Activated CD4-positive, alpha-beta T cell treated with anti-CD3 and anti-CD28 coated beads, Interleukin-2, amount 10 ng/mL, durations not matched to agents 7 days and 5 days (primary cell): ENCODE measurements at regions of chr10 and their contacts with region 1.

Region 1: GRCh38 chr10:133329491-133330202 is 7.0 kb downstream of the CALY start:
- DNase-seq: peak; percentile 86
- H3K4me3 Mint-ChIP-seq: peak overlapping the region; percentile 13
- H3K27ac Mint-ChIP-seq: peak overlapping the region; percentile 68
- H3K4me1 Mint-ChIP-seq: peaks cover 7% of the 10 kb centered on the region
- H3K27me3 Mint-ChIP-seq: peaks cover 64% of the 10 kb centered on the region

Region 2: DNA sequence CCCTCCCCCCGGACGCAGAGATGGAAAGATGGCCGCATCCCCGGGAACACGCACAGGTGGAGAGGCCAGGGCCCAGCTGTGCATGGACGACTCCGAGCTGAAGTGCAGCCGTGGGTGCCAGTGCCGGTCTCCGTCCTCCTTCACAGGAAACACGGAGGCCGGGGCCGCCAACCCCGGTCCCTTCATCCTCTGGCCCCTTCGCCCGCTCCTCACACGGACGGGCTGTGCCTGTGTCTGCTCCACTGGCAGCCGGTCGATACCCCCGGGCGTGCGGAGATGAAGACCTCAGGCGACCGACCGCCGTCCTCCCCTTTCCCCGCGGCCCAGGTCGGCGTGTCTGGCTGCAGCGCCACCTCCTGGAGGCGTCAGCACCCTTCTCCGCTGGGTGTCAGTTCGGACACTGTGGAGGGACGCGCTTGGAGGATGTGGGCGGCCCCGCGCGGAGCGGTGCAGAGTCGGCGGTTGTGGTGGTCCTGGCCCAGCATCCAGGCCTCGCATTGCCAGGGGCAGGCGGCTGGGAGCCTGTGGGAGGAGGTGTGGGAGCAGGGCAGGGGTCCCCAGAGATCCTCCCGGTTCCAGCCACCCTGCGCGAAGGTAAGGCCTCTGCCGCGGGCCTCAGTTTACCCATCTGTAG is 11.0 kb before region 1 on chr10:
- CTCF ChIA-PET with region 1: interaction called, 23 read pairs
- POLR2A ChIA-PET with region 1: no interaction called
- DNase-seq: peak; percentile 65
- H3K4me3 Mint-ChIP-seq: peak overlapping the region; percentile 36
- H3K27ac Mint-ChIP-seq: no peak overlapping the region
- H3K4me1 Mint-ChIP-seq: peaks cover 10% of the 10 kb centered on the region
- H3K27me3 Mint-ChIP-seq: peaks cover 5% of the 10 kb centered on the region

Region 3: DNA sequence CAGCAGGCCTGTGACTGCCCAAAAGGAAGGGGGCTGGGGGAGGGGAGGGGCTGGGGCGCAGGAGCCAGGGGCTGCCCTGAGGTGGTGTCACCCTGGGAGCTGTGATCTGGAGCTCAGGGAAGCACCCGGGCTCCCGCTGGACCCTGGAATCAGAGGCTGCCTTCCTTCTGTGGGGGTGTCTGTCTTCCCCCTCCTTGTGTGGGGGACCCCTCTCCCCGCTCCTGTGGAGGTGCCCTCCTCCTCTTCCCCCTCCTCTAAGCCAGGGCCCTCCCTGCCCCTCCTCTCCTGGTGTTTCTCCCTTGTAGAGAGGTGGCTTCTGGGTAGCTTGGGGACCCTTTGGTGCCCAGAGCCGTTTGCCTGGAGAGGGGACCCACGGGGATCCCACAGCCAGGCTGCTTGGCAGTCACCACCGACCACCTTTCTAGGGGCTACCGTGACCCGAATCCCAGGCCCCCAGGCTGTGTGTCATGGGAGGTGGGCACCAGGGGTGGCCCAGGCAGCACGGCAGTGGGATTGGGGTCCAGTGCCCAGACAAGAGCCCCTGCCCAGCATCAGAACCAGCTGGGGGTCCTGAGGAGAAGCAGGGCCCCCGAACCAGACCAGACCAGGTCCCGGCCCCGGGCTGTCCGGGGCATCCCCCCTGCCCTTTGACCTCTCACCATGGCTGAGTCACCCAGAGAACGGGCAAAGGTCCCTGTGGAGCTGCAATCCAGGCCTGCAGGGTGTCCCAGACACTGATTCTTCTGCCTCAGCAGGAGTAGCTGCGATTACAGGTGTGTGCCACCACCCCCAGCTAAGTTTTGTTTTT is 18.3 kb after region 1 on chr10:
- CTCF ChIA-PET with region 1: interaction called, 19 read pairs
- POLR2A ChIA-PET with region 1: no interaction called
- DNase-seq: no peak
- H3K4me3 Mint-ChIP-seq: no peak overlapping the region
- H3K27ac Mint-ChIP-seq: no peak overlapping the region
- H3K4me1 Mint-ChIP-seq: peaks cover 6% of the 10 kb centered on the region
- H3K27me3 Mint-ChIP-seq: peaks cover 16% of the 10 kb centered on the region